ENCODE measurements at regions of chr14 and their contacts with region 1.

Region 1: GRCh38 chr14:22986508-22987054 is 4.2 kb upstream of the AJUBA start:
- DNase-seq: peak; percentile 94
- H3K4me3 Mint-ChIP-seq: no peak overlapping the region
- H3K27ac Mint-ChIP-seq: no peak overlapping the region
- H3K4me1 Mint-ChIP-seq: no peaks in the 10 kb centered on the region
- H3K27me3 Mint-ChIP-seq: no peaks in the 10 kb centered on the region

Region 2: DNA sequence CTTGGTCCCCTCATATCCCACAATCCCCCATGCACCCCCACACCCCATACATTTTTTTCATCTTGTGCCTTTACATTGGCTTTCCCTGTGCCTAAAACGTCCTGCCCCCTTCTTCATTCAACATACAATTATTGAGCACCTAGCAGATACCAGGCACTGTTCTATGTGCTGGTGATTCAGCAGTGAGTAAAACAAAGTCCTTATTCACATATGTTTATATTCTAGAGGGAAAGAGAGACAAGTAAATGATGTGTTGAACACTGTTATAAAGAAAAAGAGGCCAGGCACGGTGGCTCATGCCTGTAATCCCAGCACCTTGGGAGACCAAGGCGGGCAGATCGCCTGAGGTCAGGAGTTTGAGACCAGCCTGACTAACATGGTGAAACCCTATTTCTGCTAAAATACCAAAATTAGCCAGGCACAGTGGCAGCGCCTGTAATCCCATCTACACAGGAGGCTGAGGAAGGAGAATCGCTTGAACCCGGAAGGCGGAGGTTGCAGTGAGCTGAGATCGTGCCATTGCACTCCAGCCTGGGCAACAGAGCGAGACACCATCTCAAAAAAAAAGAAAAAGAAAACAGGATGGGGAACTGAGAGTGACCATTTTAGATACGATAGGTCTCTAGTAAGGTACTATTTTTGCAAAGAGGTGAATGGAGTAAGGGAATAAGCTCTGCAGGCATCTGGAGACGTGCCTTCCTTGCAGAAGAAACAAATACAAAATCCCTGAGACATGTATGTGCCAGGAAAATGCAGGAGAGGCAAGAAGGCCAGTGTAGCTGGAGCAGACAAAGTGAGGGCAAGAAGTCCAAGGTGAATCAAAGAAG is 183.5 kb before region 1 on chr14:
- CTCF ChIA-PET with region 1: no interaction called
- POLR2A ChIA-PET with region 1: no interaction called
- DNase-seq: no peak
- H3K4me3 Mint-ChIP-seq: no peak overlapping the region
- H3K27ac Mint-ChIP-seq: no peak overlapping the region
- H3K4me1 Mint-ChIP-seq: no peaks in the 10 kb centered on the region
- H3K27me3 Mint-ChIP-seq: peaks cover 26% of the 10 kb centered on the region

Region 3: GRCh38 chr14:23006544-23007419 is 20.2 kb after region 1 on chr14:
- CTCF ChIA-PET with region 1: interaction called, 20 read pairs
- POLR2A ChIA-PET with region 1: no interaction called
- DNase-seq: peak; percentile 98
- H3K4me3 Mint-ChIP-seq: peak overlapping the region; percentile 91
- H3K27ac Mint-ChIP-seq: peak overlapping the region; percentile 92
- H3K4me1 Mint-ChIP-seq: peaks cover 50% of the 10 kb centered on the region
- H3K27me3 Mint-ChIP-seq: no peaks in the 10 kb centered on the region

Region 4: DNA sequence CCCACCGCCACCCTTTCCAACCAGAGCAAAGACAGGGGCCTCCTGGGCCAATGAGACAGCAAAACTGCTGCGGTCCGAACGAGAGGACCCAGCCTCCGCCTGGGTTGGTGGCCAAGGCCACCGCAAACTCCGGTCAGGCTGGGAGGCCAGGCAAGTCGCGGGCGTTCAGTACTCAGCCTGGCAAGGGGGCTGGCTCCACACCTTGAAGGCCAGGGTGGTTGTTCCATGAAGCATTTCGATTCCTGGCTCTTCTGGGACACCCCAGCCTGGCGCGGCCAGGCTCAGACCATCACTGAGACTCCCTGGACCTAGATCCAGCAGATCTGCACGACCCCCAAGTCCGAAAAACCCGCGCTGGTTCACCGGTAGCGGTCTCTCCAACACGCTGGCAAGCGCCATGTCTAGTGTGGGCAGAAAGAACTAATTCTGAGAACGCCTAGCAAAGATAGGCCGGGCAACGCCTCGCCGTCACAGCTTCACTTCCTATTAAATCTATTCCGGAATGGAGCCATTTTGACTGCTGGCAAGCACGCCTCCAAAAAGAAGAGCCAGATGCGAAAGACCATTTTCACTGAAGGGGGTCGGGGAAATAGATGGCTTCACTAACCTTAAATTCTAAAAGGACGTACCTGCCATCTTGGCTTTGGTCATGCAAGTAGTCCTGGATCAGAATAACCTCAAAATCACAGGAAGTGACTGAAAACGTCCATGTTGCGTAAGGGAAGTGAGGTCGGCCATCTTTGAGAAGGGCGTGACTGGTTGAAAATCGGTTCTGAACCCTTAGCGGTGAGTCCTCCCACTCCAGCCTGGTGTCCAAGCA is 48.1 kb after region 1 on chr14 and contains the start of gene PSMB5:
- CTCF ChIA-PET with region 1: interaction called, 12 read pairs
- POLR2A ChIA-PET with region 1: no interaction called
- DNase-seq: peak; percentile 95
- H3K4me3 Mint-ChIP-seq: peak within 1 kb of the TSS; percentile 93
- H3K27ac Mint-ChIP-seq: peak within 1 kb of the TSS; percentile 98
- H3K4me1 Mint-ChIP-seq: peaks cover 34% of the 10 kb centered on the region
- H3K27me3 Mint-ChIP-seq: no peaks in the 10 kb centered on the region
- total RNA-seq, gene PSMB5: 60.4 to 60.7 TPM

Measured in activated CD4-positive, alpha-beta T cell treated with anti-CD3 and anti-CD28 coated beads, Interleukin-2, amount 10 ng/mL, durations not matched to agents 7 days and 5 days (primary cell).